ENCODE measurements at regions of chr16 and their contacts with region 1.

Region 1: GRCh38 chr16:1054660-1055556 is 17.6 kb upstream of the SSTR5 start:
- DNase-seq: peak; percentile 90

Region 2: DNA sequence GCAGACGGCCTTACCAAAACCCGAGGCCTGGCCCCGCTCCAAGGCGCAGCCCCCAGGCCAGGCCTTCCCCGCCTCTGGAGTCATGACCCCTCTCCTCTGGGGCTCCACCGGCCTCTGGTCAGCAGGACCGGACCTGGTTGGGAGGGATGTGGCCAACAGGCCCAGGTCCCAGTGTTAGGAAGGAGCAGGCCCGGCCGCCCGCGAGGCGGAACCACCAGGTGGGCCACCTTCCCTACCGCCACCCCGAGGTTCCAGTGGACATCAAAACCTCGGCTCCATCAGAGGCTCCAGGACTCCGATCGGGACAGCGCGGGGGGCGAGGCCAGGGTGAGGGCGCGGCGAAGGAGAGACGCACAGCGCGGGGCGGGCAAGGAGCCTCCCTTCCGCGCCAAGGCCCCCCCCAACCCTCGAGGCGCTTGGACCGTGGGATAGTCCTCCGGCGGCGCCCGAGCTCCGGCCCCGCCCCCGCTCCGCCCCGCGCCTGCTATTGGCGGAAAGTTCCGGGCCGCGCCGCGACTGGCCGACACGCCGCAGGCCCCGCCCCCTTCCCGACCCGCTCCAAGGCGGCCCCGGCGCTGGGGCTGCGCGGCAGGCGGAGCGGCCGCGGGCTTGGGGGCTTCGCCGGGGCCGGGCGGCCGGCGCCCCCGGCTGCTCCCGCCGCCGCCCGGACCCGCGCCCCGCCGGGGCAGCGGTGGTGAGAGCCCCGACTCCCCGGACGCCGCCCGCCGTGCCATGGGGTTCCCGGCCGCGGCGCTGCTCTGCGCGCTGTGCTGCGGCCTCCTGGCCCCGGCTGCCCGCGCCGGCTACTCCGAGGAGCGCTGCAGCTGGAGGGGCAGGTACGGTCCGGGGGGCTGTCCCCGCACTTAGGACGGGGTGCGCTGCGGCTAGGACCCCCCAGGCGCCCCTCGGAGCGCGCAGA is 340.1 kb before region 1 on chr16 and contains the start of gene METRN:
- intact Hi-C with region 1: loop called (anchors 5 kb)
- DNase-seq: peak; percentile 96
- total RNA-seq, gene METRN: 21.6 to 24.9 TPM

Region 3: GRCh38 chr16:813204-813915 is 241.5 kb before region 1 on chr16:
- intact Hi-C with region 1: loop called (anchors 5 to 10 kb)
- DNase-seq: peak; percentile 80

Region 4: DNA sequence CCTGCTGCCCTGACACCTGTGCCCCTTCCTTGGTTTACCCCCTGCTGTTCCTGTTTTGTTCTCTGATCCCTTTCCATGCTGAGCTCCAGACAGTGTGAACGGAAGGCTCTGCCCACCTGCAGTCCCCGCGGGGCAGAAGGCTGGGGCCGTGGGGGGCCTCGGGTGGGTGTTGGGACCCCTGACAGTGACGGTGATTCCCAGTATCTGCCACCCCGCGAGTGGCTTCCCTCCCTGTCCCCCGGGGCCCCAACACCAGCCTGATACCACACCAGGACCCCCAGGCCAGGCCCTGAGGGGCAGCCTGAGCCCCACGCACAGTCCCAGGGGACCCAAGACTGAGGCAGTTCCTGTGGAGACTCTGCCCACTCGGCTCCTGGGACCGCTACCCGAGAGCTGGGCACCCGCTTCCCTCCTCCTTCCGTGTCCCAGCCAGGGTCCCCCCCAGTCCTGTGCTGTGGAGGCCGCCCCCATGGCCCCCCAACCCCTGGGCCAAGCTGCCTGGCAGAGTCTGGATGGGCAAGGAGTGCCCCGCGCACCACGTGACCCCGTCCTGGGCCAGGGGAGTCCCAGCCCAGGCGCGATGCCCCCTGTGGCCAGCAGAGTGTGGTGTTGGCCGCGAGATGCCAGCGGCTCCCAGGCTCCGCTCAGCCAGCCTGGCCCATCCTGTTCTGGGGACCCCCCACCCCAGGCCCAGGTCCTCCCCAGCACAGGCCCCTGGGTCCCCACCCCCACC is 51.1 kb after region 1 on chr16:
- intact Hi-C with region 1: loop called in 1 of 2 experiments (anchors 2 kb)
- DNase-seq: no peak